ENCODE measurements at regions of chr22 and their contacts with region 1.

Region 1: DNA sequence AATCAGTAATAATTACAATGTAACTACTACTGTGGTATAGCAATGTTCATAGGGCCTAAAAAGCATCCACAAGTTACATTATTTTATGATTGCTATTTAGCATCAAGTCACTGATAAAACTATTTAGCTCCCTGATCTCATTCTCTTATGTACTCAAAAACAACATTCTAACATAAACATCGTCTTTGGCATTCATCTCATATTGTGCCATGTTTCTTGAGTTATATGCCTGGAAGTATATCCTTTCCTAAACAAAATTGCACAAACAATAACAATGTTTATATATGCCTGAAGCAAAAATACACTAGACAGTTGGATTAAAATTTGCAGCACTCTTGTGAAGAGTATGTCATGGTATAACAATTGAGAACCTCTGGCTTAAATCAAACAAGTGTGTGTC is 34.1 kb downstream of the HORMAD2 start:
- DNase-seq: no peak
- H3K4me3 ChIP-seq: no peak overlapping the region
- H3K27ac ChIP-seq: no peak overlapping the region
- H3K4me1 ChIP-seq: no peaks in the 10 kb centered on the region
- H3K27me3 ChIP-seq: no peaks in the 10 kb centered on the region
- CTCF ChIP-seq: no peak
- POLR2A ChIP-seq: no peak

Region 2: DNA sequence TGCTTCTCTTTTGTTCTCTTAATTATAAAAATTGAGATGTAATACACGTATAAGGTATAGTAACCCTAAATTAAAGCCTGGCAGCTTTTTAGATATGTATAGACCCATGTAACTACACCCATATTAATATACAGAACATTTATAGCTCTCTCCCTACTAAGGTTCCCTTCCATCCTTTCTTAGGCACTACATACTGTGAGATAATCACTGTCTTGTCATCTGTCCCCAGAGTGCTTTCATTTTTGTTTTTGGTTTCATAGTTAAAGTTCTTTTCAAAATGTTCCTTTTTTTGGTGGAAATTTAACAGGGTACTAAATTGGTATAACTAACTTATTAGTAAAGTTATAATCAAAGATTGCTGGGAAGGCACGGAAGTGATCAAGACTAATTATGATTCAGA is 182.2 kb before region 1 on chr22:
- intact Hi-C with region 1: no loop called
- DNase-seq: no peak
- H3K4me3 ChIP-seq: no peak overlapping the region
- H3K27ac ChIP-seq: no peak overlapping the region
- H3K4me1 ChIP-seq: peaks cover 0 to 26% (median 3%) of the 10 kb centered on the region in 3 donors
- H3K27me3 ChIP-seq: no peaks in the 10 kb centered on the region
- CTCF ChIP-seq: no peak
- POLR2A ChIP-seq: no peak

Region 3: DNA sequence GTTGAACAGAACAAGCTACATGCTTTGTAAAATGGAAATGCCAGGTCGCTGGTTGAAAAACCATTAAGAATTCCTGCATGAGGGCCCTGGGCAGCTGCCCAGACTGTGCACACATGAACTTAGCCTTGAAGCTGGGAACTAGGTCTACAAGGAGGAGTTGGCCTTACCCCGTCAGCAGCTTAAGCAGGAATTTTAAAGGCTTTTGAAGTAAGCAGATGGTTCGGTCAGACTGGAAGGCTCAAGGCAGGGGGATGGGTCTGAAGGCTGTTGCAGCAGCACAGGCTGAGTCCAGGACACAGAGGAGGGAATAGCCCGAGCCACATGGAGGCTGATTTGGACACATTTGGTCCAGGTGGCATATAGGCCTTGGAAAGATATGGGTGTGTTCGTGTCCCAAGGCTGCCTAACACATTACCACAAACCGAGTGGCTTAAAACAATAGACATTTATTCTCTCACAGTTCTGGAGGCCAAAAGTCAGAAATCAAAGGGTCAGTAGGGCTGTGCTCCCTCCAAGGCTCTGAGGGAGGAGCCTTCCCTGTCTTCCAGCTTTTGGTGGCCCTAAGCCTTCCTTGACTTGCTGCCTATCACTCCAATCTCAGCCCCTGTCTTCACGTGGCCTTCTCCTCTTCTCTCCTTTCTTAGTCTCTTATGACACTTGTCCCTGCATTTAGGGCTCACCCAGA is 120.6 kb after region 1 on chr22:
- intact Hi-C with region 1: no loop called
- DNase-seq: no peak
- H3K4me3 ChIP-seq: no peak overlapping the region
- H3K27ac ChIP-seq: no peak overlapping the region
- H3K4me1 ChIP-seq: peaks cover 0 to 27% (median 0%) of the 10 kb centered on the region in 3 donors
- H3K27me3 ChIP-seq: peaks cover 0 to 10% (median 0%) of the 10 kb centered on the region in 4 donors
- CTCF ChIP-seq: no peak
- POLR2A ChIP-seq: no peak

Region 4: GRCh38 chr22:30253205-30253852 is 139.0 kb after region 1 on chr22:
- intact Hi-C with region 1: loop called (anchors 5 kb)
- DNase-seq: no peak
- H3K4me3 ChIP-seq: peak overlapping the region in 1 of 4 donors; percentile 8
- H3K27ac ChIP-seq: peak overlapping the region; percentile 28 to 72 (median 48)
- H3K4me1 ChIP-seq: peaks cover 24 to 68% (median 26%) of the 10 kb centered on the region in 3 donors
- H3K27me3 ChIP-seq: peaks cover 0 to 16% (median 0%) of the 10 kb centered on the region in 4 donors
- CTCF ChIP-seq: no peak
- POLR2A ChIP-seq: no peak

Region 5: GRCh38 chr22:30305519-30305905 is 191.2 kb after region 1 on chr22:
- intact Hi-C with region 1: no loop called
- DNase-seq: no peak
- H3K4me3 ChIP-seq: peak overlapping the region in 2 of 4 donors; percentile 18 to 47
- H3K27ac ChIP-seq: peak overlapping the region; percentile 88 to 99 (median 94)
- H3K4me1 ChIP-seq: peaks cover 85 to 100% (median 97%) of the 10 kb centered on the region in 3 donors
- H3K27me3 ChIP-seq: no peaks in the 10 kb centered on the region
- CTCF ChIP-seq: no peak
- POLR2A ChIP-seq: peak in 2 of 4 donors; percentile 65 to 67